Activated CD4-positive, alpha-beta memory T cell treated with anti-CD3 and anti-CD28 coated beads for 36 hours (primary cell): ENCODE measurements at regions of chr6 and their contacts with region 1.

Region 1: GRCh38 chr6:139124887-139125672 is 9.8 kb upstream of the HECA start:
- DNase-seq: peak; percentile 89
- H3K4me3 Mint-ChIP-seq: peak overlapping the region; percentile 43
- H3K27ac Mint-ChIP-seq: peak overlapping the region; percentile 93
- H3K4me1 Mint-ChIP-seq: peaks cover 52% of the 10 kb centered on the region
- H3K27me3 Mint-ChIP-seq: no peaks in the 10 kb centered on the region

Region 2: GRCh38 chr6:138278326-138278725 is 846.8 kb before region 1 on chr6:
- CTCF ChIA-PET with region 1: no interaction called
- POLR2A ChIA-PET with region 1: no interaction called
- intact Hi-C with region 1: no loop called
- DNase-seq: no peak
- H3K4me3 Mint-ChIP-seq: no peak overlapping the region
- H3K27ac Mint-ChIP-seq: no peak overlapping the region
- H3K4me1 Mint-ChIP-seq: no peaks in the 10 kb centered on the region
- H3K27me3 Mint-ChIP-seq: peaks cover 2% of the 10 kb centered on the region

Region 3: DNA sequence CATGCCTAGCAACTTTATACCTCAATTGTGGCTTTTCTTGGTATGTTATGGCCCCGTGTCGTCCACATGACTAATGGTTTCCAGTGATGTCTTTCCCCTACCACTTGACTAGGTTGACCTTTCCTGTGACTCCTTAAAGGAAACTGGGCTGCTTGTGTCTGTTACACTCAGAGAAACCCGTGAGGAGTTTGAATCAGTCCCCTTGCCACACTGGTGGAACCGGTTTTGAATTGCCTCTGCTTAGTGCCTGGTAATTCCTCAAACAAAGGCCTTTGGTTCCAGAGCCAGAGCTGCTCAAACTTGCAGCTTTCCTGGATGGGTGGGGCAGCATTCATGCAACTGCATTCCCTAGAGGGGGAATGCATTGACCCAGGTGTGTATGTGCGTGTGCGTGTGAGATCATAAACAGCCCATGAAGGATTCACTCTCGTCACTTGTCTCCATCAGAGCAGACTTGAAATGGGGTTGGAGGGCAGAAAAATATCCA is 307.2 kb before region 1 on chr6:
- CTCF ChIA-PET with region 1: interaction called, 4 read pairs
- POLR2A ChIA-PET with region 1: no interaction called
- intact Hi-C with region 1: loop called (anchors 5 kb)
- DNase-seq: peak; percentile 50
- H3K4me3 Mint-ChIP-seq: no peak overlapping the region
- H3K27ac Mint-ChIP-seq: peak overlapping the region; percentile 50
- H3K4me1 Mint-ChIP-seq: peaks cover 30% of the 10 kb centered on the region
- H3K27me3 Mint-ChIP-seq: peaks cover 3% of the 10 kb centered on the region

Region 4: GRCh38 chr6:138896104-138896756 is 228.8 kb before region 1 on chr6:
- CTCF ChIA-PET with region 1: no interaction called
- POLR2A ChIA-PET with region 1: no interaction called
- intact Hi-C with region 1: no loop called
- DNase-seq: no peak
- H3K4me3 Mint-ChIP-seq: no peak overlapping the region
- H3K27ac Mint-ChIP-seq: no peak overlapping the region
- H3K4me1 Mint-ChIP-seq: peaks cover 10% of the 10 kb centered on the region
- H3K27me3 Mint-ChIP-seq: no peaks in the 10 kb centered on the region

Region 5: GRCh38 chr6:139146317-139146726 is 21.2 kb after region 1 on chr6:
- CTCF ChIA-PET with region 1: interaction called, 13 read pairs
- POLR2A ChIA-PET with region 1: interaction called, 18 read pairs
- intact Hi-C with region 1: loop called (anchors 1 kb)
- DNase-seq: peak; percentile 59
- H3K4me3 Mint-ChIP-seq: peak overlapping the region; percentile 72
- H3K27ac Mint-ChIP-seq: peak overlapping the region; percentile 99
- H3K4me1 Mint-ChIP-seq: peaks cover 94% of the 10 kb centered on the region
- H3K27me3 Mint-ChIP-seq: no peaks in the 10 kb centered on the region

Region 6: DNA sequence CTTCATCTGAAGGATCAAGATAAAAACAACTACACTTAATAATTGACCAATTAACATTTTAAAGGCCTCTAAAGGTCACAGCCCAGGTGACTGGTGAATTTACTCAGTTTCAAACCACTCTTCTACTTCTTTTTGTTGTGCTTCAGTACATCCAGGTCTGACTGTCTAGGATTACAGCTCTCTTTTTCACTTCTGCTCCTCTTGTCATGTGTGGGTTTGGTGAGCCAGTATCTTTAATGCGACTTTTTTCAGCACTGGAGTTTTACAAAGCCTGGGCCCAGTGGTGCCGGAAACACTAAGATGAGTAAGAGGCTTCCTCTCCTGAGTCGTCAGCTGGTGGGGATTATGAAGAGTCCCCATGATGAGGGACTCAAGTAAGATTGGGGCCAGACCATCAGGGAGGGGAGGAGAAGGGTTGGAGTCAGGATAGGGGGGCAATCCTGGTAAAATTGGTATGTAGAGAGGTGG is 36.8 kb after region 1 on chr6:
- CTCF ChIA-PET with region 1: interaction called, 10 read pairs
- POLR2A ChIA-PET with region 1: interaction called, 3 read pairs
- intact Hi-C with region 1: no loop called
- DNase-seq: peak; percentile 88
- H3K4me3 Mint-ChIP-seq: peak overlapping the region; percentile 61
- H3K27ac Mint-ChIP-seq: peak overlapping the region; percentile 96
- H3K4me1 Mint-ChIP-seq: peaks cover 92% of the 10 kb centered on the region
- H3K27me3 Mint-ChIP-seq: no peaks in the 10 kb centered on the region

Region 7: DNA sequence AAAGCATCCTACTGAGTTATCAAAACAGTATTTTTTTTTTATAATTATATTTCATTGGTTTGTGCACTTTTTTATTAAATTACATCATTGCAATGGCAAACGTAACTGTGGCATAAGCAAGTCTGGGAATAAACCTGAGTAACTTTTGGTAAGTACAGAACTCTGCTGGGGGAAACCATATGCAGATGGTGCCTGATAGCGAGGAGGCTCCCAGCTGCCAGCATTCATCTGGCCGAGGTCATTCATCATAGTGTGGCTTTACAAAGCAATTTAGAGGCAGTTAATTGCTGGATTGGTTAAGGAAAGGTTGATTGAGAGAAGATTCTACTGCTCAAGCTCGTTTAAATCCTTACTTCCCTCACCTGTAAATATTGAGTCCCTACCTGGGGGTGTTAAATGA is 62.4 kb after region 1 on chr6:
- CTCF ChIA-PET with region 1: interaction called, 7 read pairs
- POLR2A ChIA-PET with region 1: interaction called, 4 read pairs
- intact Hi-C with region 1: loop called (anchors 2 kb)
- DNase-seq: no peak
- H3K4me3 Mint-ChIP-seq: no peak overlapping the region
- H3K27ac Mint-ChIP-seq: no peak overlapping the region
- H3K4me1 Mint-ChIP-seq: peaks cover 42% of the 10 kb centered on the region
- H3K27me3 Mint-ChIP-seq: no peaks in the 10 kb centered on the region

Region 8: GRCh38 chr6:139250296-139251044 is 125.4 kb after region 1 on chr6:
- CTCF ChIA-PET with region 1: interaction called, 5 read pairs
- POLR2A ChIA-PET with region 1: no interaction called
- intact Hi-C with region 1: loop called (anchors 5 kb)
- DNase-seq: peak; percentile 75
- H3K4me3 Mint-ChIP-seq: no peak overlapping the region
- H3K27ac Mint-ChIP-seq: peak overlapping the region; percentile 73
- H3K4me1 Mint-ChIP-seq: peaks cover 49% of the 10 kb centered on the region
- H3K27me3 Mint-ChIP-seq: no peaks in the 10 kb centered on the region

Region 9: GRCh38 chr6:139364302-139364981 is 239.4 kb after region 1 on chr6:
- CTCF ChIA-PET with region 1: interaction called, 41 read pairs
- POLR2A ChIA-PET with region 1: interaction called, 5 read pairs
- intact Hi-C with region 1: loop called (anchors 1 kb)
- DNase-seq: no peak
- H3K4me3 Mint-ChIP-seq: no peak overlapping the region
- H3K27ac Mint-ChIP-seq: no peak overlapping the region
- H3K4me1 Mint-ChIP-seq: peaks cover 27% of the 10 kb centered on the region
- H3K27me3 Mint-ChIP-seq: no peaks in the 10 kb centered on the region